ENCODE measurements at regions of chr5 and their contacts with region 1.

Region 1: GRCh38 chr5:149803641-149804468 is 73.7 kb downstream of the PPARGC1B start:
- DNase-seq: no peak
- H3K4me3 ChIP-seq: no peak overlapping the region
- H3K27ac ChIP-seq: no peak overlapping the region
- H3K4me1 ChIP-seq: peaks cover 0 to 18% (median 12%) of the 10 kb centered on the region in 4 donors
- H3K27me3 ChIP-seq: no peaks in the 10 kb centered on the region
- CTCF ChIP-seq: no peak

Region 2: DNA sequence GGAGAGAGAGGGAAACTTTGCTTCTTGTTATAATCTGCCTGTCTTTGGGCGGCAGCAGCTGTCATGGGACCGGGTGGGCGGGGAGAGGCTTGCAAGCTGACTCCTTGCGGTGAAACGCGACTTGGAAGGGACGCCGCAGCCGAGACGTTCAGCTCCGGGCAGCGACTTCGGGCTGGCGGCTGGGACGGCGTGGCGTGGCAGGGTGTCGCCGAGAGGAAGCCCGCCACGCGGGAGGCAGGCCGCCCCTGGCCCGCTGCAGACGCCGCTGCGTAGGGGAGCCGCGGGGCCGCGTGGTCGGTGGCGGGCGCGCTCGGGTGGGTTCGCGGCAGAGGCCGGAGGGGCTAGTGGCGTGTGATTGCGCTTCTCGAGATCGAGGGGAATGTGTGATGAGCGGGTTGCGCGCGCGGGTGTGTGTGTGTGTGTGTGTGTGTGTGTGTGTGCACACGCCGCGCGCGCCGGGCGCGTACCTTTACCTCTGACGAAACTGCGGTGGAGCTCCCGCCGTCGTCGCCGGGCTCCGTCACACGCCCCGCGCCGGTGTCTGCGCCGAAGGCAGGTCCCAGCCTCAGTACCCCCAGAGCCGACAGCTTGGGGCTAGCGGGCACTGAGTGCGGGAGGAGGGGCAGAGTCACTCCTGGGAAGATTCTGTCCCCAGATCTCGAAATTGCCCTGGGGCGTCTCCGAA is 72.1 kb before region 1 on chr5:
- intact Hi-C with region 1: loop called (anchors 10 kb)
- DNase-seq: peak; percentile 90 to 91
- H3K4me3 ChIP-seq: peak overlapping the region; percentile 63 to 91
- H3K27ac ChIP-seq: peak overlapping the region; percentile 63 to 66
- H3K4me1 ChIP-seq: peaks cover 0 to 19% (median 12%) of the 10 kb centered on the region in 4 donors
- H3K27me3 ChIP-seq: no peaks in the 10 kb centered on the region
- CTCF ChIP-seq: peak in 1 of 2 experiments; percentile 19

Region 3: GRCh38 chr5:150009671-150010387 is 206.0 kb after region 1 on chr5:
- intact Hi-C with region 1: no loop called
- DNase-seq: no peak
- H3K4me3 ChIP-seq: no peak overlapping the region
- H3K27ac ChIP-seq: no peak overlapping the region
- H3K4me1 ChIP-seq: no peaks in the 10 kb centered on the region
- H3K27me3 ChIP-seq: no peaks in the 10 kb centered on the region
- CTCF ChIP-seq: no peak

Measured in tibial artery (tissue), 4 donors.